Calu3 (cell line): ENCODE measurements at regions of chr1 and their contacts with region 1.

Region 1: GRCh38 chr1:224922404-224923164 is 6.9 kb upstream of the DNAH14 start:
- DNase-seq: peak; percentile 30
- H3K4me3 Mint-ChIP-seq: no peak overlapping the region
- H3K27ac Mint-ChIP-seq: no peak overlapping the region
- H3K4me1 Mint-ChIP-seq: peaks cover 11% of the 10 kb centered on the region
- H3K27me3 Mint-ChIP-seq: no peaks in the 10 kb centered on the region
- CTCF ChIP-seq: peak; percentile 15

Region 2: GRCh38 chr1:224067621-224068457 is 854.7 kb before region 1 on chr1:
- CTCF ChIA-PET with region 1: no interaction called
- intact Hi-C with region 1: no loop called
- DNase-seq: no peak
- H3K4me3 Mint-ChIP-seq: no peak overlapping the region
- H3K27ac Mint-ChIP-seq: peak overlapping the region; percentile 95
- H3K4me1 Mint-ChIP-seq: peaks cover 53% of the 10 kb centered on the region
- H3K27me3 Mint-ChIP-seq: no peaks in the 10 kb centered on the region
- CTCF ChIP-seq: no peak

Region 3: DNA sequence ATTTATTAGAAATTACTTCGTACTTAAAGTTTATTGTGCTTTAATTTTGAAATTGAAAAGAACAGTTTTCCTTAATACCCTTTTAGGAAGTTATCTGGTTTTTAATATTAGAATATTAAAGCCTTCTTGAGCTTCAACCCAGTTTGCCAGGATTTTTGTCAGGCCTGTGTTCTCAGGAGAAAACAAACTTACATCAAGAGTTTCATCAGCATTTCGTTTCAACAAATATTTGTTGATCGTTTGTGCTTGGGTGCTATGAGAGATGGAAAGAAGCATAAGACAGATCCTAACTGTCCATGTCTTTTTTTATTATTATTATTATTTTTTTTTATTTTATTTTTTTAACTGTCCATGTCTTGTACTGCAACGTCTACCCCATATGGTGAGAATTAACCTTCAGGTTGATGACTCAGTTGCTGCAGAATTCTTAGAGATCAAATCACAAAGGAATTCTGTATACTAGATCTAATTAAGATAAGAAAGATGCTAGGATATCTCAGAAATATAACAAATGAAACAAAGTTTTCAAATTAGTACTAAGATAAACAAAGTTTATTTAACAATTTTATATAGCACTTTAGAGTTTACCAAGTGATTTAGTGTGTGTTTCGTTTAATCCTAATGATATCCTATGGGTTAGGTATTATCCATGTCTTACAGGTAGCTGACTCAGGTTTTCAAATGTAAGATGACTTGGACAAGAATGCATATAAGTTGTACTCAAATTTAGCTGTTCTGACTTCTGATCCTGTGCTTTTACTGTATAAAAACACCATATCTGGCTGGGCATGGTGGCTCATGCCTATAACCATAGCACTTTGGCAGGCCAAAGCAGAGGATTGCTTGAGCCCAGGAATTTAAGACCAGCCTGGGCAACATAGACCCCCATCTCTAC is 794.4 kb before region 1 on chr1:
- CTCF ChIA-PET with region 1: no interaction called
- intact Hi-C with region 1: loop called (anchors 10 kb)
- DNase-seq: no peak
- H3K4me3 Mint-ChIP-seq: no peak overlapping the region
- H3K27ac Mint-ChIP-seq: no peak overlapping the region
- H3K4me1 Mint-ChIP-seq: peaks cover 14% of the 10 kb centered on the region
- H3K27me3 Mint-ChIP-seq: no peaks in the 10 kb centered on the region
- CTCF ChIP-seq: no peak

Region 4: DNA sequence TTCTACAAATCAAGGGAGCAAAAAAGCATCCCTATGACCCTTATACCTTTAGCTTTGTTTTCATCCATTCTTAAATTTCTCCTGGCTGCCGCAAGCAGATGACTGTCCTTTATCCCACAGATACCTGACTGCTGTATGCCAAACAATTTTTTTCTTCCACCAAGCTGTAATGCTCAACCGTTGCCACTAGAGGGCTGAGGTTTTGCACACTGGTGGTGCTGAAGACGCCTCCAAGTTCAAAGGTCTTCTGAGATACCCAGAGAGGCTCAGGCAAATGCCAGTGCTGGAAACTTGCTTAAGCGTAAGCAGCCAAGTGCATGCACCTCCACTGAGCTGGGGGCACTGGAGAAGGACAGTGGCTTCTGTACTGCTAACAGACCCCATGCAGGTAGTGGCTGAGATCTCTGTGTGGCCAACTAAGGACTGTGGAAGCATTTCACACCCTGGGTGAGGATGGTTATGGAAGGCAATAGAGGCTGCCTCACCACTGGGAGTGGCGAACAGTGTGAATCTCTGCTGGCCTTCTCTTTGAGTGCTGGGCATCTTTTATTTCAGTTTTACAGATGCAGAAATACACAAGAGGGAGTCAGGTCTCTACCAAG is 277.9 kb before region 1 on chr1:
- CTCF ChIA-PET with region 1: interaction called, 29 read pairs
- intact Hi-C with region 1: loop called (anchors 1 kb)
- DNase-seq: peak; percentile 66
- H3K4me3 Mint-ChIP-seq: no peak overlapping the region
- H3K27ac Mint-ChIP-seq: no peak overlapping the region
- H3K4me1 Mint-ChIP-seq: peaks cover 8% of the 10 kb centered on the region
- H3K27me3 Mint-ChIP-seq: peaks cover 18% of the 10 kb centered on the region
- CTCF ChIP-seq: peak; percentile 95

Region 5: GRCh38 chr1:224675590-224675989 is 247.0 kb before region 1 on chr1:
- CTCF ChIA-PET with region 1: no interaction called
- intact Hi-C with region 1: no loop called
- DNase-seq: no peak
- H3K4me3 Mint-ChIP-seq: no peak overlapping the region
- H3K27ac Mint-ChIP-seq: no peak overlapping the region
- H3K4me1 Mint-ChIP-seq: no peaks in the 10 kb centered on the region
- H3K27me3 Mint-ChIP-seq: peaks cover 57% of the 10 kb centered on the region
- CTCF ChIP-seq: no peak